AG04449 (cell line): ENCODE measurements at regions of chr19 and their contacts with region 1.

Region 1: GRCh38 chr19:35911790-35912189 is 3.7 kb upstream of the TYROBP start:
- DNase-seq: no peak
- H3K4me3 ChIP-seq: no peak overlapping the region
- CTCF ChIP-seq: no peak

Region 2: DNA sequence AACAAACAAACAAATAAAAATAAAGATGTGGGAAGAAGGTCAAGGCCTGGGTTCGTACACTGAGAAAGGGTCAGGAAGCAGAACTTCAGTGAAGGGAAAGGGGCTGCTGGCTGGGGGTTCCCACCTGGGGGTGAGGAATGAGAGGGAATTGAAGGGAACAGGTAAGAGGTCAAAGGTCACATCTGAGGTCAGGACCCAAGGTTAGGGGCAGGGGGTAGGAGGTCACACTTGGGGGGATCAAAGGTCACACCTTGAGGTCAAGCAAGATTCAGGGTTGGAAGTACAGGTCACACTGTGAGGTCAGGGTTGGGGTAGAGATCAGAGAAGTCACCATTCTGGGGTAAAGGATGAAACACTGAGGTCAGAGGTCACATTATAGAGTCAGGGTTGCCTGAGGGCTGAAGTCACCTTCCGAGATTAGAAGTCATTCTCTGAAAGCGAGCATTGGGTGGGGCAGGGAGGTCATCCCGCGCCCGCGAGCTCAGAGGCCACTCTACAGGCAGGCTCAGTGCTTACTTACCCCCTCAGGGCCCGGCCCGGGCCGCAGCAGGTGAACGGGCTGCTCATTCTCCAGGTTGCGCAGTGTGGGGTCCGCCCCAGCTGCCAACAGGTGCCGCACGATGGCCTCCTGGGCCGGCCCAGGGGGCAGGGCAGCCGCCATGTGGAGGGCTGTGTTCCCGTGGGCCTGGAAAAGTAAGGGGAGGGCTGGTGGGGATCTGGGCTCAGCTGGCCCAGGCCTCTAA is 22.2 kb before region 1 on chr19:
- CTCF ChIA-PET with region 1: no interaction called
- POLR2A ChIA-PET with region 1: no interaction called
- DNase-seq: no peak
- H3K4me3 ChIP-seq: no peak overlapping the region
- CTCF ChIP-seq: no peak

Region 3: GRCh38 chr19:35931161-35931873 is 19.5 kb after region 1 on chr19:
- CTCF ChIA-PET with region 1: interaction called, 15 read pairs
- POLR2A ChIA-PET with region 1: no interaction called
- DNase-seq: peak; percentile 96
- H3K4me3 ChIP-seq: peak overlapping the region; percentile 52
- CTCF ChIP-seq: peak; percentile 97